ENCODE measurements at regions of chr3 and their contacts with region 1.

Region 1: DNA sequence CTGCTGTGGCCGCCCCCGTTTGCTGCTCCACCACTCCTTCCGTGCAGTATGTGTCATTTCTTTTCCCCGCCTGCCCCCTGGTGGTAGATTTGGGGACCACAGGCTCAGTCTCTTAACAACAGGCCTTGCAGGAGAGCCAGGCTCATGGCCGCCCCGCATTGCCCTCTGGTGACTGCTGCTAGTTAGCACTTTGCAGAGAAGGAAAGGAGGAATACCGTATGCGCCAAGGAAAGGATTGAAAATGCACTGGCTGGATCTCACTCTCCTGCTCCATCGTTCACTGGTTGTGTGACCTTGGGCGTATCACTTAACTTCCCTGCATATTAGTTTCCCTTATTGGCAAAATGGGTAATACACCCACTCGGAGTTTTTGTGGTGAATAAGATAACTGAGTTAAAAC is 39.3 kb upstream of the PXYLP1 start:
- DNase-seq: peak; percentile 100
- H3K4me3 Mint-ChIP-seq: no peak overlapping the region
- H3K27ac Mint-ChIP-seq: no peak overlapping the region
- H3K4me1 Mint-ChIP-seq: peaks cover 7% of the 10 kb centered on the region
- H3K27me3 Mint-ChIP-seq: peaks cover 85% of the 10 kb centered on the region
- CTCF ChIP-seq: peak; percentile 99

Region 2: DNA sequence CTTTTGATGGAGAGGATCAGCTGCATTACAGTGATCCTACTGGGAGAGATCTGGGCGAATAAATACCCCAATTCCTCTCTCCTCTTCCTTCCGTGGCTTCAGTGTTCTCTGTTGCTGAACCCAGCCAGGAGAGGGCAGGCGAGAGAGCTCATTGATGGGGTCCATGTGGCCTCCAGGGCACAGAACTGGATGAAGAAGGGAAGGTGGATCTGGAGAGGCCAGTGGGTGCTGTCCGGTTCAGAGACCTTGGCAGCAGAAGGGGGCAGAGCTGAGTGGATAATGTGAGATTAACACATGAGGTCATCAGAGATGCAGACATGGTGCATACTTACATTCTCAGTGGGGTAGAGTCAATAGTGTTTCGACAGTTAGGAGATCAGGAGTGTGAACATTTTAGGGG is 1063.7 kb before region 1 on chr3:
- CTCF ChIA-PET with region 1: no interaction called
- intact Hi-C with region 1: loop called (anchors 2 kb)
- DNase-seq: peak; percentile 73
- H3K4me3 Mint-ChIP-seq: no peak overlapping the region
- H3K27ac Mint-ChIP-seq: no peak overlapping the region
- H3K4me1 Mint-ChIP-seq: no peaks in the 10 kb centered on the region
- H3K27me3 Mint-ChIP-seq: peaks cover 45% of the 10 kb centered on the region
- CTCF ChIP-seq: peak; percentile 83

Region 3: GRCh38 chr3:140898340-140899180 is 293.8 kb before region 1 on chr3:
- CTCF ChIA-PET with region 1: interaction called, 4 read pairs
- intact Hi-C with region 1: loop called (anchors 1 kb)
- DNase-seq: peak; percentile 70
- H3K4me3 Mint-ChIP-seq: no peak overlapping the region
- H3K27ac Mint-ChIP-seq: no peak overlapping the region
- H3K4me1 Mint-ChIP-seq: no peaks in the 10 kb centered on the region
- H3K27me3 Mint-ChIP-seq: peaks cover 30% of the 10 kb centered on the region
- CTCF ChIP-seq: no peak

Region 4: GRCh38 chr3:141000027-141000663 is 192.2 kb before region 1 on chr3:
- CTCF ChIA-PET with region 1: interaction called, 15 read pairs
- intact Hi-C with region 1: loop called (anchors 1 kb)
- DNase-seq: peak; percentile 81
- H3K4me3 Mint-ChIP-seq: no peak overlapping the region
- H3K27ac Mint-ChIP-seq: no peak overlapping the region
- H3K4me1 Mint-ChIP-seq: peaks cover 8% of the 10 kb centered on the region
- H3K27me3 Mint-ChIP-seq: peaks cover 5% of the 10 kb centered on the region
- CTCF ChIP-seq: peak; percentile 67

Region 5: GRCh38 chr3:141011232-141011996 is 180.9 kb before region 1 on chr3:
- CTCF ChIA-PET with region 1: interaction called, 4 read pairs
- intact Hi-C with region 1: loop called (anchors 1 kb)
- DNase-seq: peak; percentile 94
- H3K4me3 Mint-ChIP-seq: no peak overlapping the region
- H3K27ac Mint-ChIP-seq: no peak overlapping the region
- H3K4me1 Mint-ChIP-seq: no peaks in the 10 kb centered on the region
- H3K27me3 Mint-ChIP-seq: peaks cover 84% of the 10 kb centered on the region
- CTCF ChIP-seq: peak; percentile 96

Region 6: GRCh38 chr3:141275026-141275910 is 82.9 kb after region 1 on chr3:
- CTCF ChIA-PET with region 1: no interaction called
- intact Hi-C with region 1: no loop called
- DNase-seq: no peak
- H3K4me3 Mint-ChIP-seq: no peak overlapping the region
- H3K27ac Mint-ChIP-seq: no peak overlapping the region
- H3K4me1 Mint-ChIP-seq: no peaks in the 10 kb centered on the region
- H3K27me3 Mint-ChIP-seq: no peaks in the 10 kb centered on the region
- CTCF ChIP-seq: no peak

Region 7: DNA sequence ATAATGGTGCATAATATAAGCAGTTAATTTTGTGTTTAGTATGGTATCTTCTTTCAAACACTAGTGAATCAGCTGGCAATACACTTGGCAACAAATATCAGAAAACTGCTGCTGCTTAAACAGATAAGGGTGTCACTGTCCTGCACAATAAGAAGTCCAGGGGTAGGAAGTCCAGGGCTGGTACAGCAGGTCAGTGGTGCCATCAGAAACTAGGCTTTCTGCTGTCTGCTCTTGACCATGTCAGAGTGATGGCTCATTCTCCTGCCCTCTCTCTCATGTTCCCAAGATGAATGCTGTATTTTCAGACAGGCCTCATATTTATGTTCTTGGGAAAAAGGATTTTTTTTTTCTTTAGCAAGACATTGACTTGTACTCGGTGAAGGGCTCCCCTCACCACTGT is 561.7 kb after region 1 on chr3:
- CTCF ChIA-PET with region 1: no interaction called
- intact Hi-C with region 1: no loop called
- DNase-seq: no peak
- H3K4me3 Mint-ChIP-seq: no peak overlapping the region
- H3K27ac Mint-ChIP-seq: no peak overlapping the region
- H3K4me1 Mint-ChIP-seq: no peaks in the 10 kb centered on the region
- H3K27me3 Mint-ChIP-seq: no peaks in the 10 kb centered on the region
- CTCF ChIP-seq: no peak